ENCODE measurements at regions of chr6 and their contacts with region 1.

Region 1: DNA sequence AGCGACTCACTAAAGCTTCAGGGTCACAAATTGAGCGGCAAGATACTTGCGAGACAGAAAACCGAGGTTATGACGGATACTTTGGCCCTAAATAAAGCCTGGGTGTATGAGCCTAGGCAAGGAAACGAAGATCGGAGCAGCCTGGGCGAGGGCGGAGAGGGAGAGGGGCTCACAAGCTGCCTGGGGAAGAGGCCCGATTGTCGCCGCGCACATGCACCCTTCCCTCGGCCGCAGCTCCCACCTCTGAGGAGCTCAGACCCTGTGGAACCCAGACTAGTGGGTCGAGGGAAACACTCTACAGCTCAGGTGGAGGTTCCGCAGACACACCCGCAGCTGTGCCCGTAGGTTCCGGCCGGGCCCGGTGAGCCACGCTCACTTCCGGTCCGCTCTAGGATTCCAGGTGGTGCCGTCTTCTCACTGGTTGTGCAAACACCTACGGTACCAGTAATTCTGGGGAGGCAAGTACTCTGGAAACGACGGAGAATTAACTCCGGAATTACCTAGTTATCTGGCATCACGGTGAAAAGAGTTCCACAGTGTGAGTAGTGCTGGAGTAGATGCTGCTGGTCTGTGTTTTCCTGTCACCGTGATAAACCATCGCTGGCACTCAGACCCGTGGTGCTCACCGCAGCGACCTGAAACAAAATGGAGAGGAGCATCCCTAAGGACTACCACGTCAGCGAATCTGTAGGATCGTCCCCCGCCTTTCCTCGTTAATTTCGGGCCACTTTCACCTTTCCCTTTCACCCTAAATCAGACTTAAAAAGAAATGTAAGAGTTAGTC is 61.5 kb downstream of the GPX5 start:
- H3K4me3 ChIP-seq: peak overlapping the region; percentile 73
- H3K27ac ChIP-seq: peak overlapping the region; percentile 84
- H3K4me1 ChIP-seq: peaks cover 9% of the 10 kb centered on the region
- CTCF ChIP-seq: no peak

Region 2: DNA sequence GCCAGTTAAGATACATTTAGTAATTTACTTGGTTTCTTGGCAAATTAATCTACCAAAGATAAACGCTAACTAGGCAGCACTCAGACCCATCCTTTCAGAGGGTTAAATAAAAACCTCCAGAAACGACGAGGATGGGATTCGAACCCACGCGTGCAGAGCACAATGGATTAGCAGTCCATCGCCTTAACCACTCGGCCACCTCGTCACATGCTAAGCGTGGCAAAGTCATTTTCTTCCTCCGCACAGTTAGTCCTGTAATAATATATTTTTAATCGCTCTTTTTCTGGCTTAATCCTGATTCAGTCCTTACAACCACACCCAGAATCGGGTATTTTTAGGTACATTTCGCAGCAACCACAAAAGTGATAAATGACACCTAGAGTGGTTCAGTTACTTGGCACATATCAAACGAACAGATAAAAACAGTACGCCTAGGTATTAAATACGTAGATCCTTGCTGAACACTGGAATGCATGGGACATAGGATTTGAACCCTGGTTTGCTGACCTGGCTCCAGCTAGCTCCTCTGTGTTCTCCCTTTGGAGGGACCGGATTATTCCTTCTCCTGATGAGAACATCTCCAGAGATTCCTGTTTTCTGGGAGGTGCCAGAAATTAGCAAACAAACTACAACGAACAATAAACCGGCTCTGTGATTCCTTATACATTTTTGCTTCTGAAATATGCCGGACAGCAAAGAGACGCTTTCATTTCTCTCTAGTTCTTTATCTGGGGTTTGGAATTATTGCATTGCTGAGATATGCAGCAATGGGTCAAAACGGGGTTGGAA is 10.3 kb after region 1 on chr6:
- CTCF ChIA-PET with region 1: no interaction called
- POLR2A ChIA-PET with region 1: interaction called, 16 read pairs
- H3K4me3 ChIP-seq: peak overlapping the region; percentile 48
- H3K27ac ChIP-seq: peak overlapping the region; percentile 37; the same call in 1 of the 2 replicates
- H3K4me1 ChIP-seq: no peaks in the 10 kb centered on the region
- CTCF ChIP-seq: no peak

Region 3: GRCh38 chr6:28648035-28648877 is 61.1 kb after region 1 on chr6:
- CTCF ChIA-PET with region 1: interaction called, 6 read pairs
- POLR2A ChIA-PET with region 1: interaction called, 10 read pairs
- H3K4me3 ChIP-seq: peak overlapping the region; percentile 58
- H3K27ac ChIP-seq: peak overlapping the region; percentile 72
- H3K4me1 ChIP-seq: peaks cover 21% of the 10 kb centered on the region
- CTCF ChIP-seq: no peak

Measured in HEK293 (cell line).